Activated CD4-positive, alpha-beta memory T cell treated with anti-CD3 and anti-CD28 coated beads, Interleukin-2, amount 10 ng/mL, durations not matched to agents 7 days and 5 days (primary cell): ENCODE measurements at regions of chr7 and their contacts with region 1.

Region 1: DNA sequence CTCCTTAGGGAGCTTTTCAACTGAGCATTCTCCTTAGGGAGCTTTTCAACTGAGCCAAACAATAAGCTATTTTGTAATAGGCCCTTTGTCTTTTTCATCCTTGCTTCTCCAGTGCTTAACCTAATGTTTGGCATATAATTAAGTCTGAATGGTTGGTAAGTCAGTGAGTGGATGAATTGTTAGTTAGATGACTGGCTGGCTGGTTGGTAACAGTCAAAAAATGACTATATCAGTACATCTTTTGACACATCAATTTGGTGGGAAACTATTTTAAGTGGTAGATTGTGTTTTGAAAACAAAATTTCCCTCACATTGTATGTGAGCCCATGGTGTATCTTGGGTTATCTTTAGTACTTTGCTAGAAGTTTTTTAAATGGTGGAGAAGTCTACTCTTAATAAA is 16.4 kb downstream of the ING3 start:
- DNase-seq: no peak
- H3K4me3 Mint-ChIP-seq: no peak overlapping the region
- H3K27ac Mint-ChIP-seq: no peak overlapping the region
- H3K4me1 Mint-ChIP-seq: peaks cover 3% of the 10 kb centered on the region
- H3K27me3 Mint-ChIP-seq: no peaks in the 10 kb centered on the region

Region 2: DNA sequence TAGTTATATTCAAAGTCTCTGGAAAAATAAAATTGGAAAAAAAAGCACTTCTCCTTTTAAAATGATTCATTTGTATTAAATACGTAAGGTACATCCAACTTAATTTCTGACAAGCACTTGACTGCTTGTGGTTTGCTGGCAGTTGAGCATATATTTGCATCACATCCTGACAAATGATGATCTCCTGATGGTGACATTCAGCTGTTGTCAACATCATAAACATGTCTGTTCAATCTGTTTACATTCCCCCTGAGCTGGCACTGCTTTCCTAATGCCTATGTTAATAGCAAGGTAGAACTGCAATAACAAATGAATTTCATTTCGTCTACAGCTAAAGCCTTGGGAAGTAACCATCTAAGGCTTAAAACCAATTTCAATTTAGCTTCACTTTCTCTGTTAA is 133.4 kb before region 1 on chr7:
- CTCF ChIA-PET with region 1: no interaction called
- POLR2A ChIA-PET with region 1: no interaction called
- DNase-seq: no peak
- H3K4me3 Mint-ChIP-seq: no peak overlapping the region
- H3K27ac Mint-ChIP-seq: no peak overlapping the region
- H3K4me1 Mint-ChIP-seq: no peaks in the 10 kb centered on the region
- H3K27me3 Mint-ChIP-seq: peaks cover 10% of the 10 kb centered on the region

Region 3: DNA sequence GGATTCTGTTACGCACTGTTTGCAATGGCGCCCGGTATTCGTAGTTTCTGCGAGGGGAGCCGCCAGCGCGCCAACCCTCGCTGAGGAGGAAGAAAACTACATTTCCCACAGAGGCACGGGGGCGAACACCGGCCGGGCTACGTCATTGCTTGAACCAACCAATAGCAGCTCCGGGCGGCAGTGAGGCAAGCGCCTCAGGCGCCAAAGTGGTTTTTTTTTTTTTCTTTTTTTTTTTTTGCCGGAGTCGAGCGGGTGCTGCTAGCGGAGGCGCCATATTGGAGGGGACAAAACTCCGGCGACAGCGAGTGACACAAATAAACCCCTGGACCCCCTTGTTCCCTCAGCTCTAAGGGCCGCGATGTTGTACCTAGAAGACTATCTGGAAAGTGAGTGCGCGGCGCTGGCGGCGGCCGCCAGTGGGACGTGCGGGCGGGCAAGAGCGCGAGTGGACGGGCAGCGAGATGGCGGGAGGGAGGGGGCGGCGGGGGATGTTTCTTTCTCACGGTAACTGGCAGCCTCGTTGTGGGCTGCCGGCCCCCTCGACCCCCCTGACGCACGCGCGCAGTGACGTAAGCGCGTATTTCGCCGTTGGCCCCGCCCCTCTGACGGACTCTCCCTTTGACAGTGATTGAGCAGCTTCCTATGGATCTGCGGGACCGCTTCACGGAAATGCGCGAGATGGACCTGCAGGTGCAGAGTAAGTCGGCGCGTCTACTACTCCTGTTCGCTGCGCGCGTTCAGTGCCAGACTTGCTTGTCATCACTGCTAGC is 16.2 kb before region 1 on chr7 and contains the start of gene ING3:
- CTCF ChIA-PET with region 1: interaction called, 3 read pairs
- POLR2A ChIA-PET with region 1: interaction called, 11 read pairs
- DNase-seq: peak; percentile 98
- H3K4me3 Mint-ChIP-seq: peak within 1 kb of the TSS; percentile 97
- H3K27ac Mint-ChIP-seq: peak within 1 kb of the TSS; percentile 96
- H3K4me1 Mint-ChIP-seq: peaks cover 34% of the 10 kb centered on the region
- H3K27me3 Mint-ChIP-seq: peaks cover 5% of the 10 kb centered on the region
- total RNA-seq, gene ING3: 22.2 to 26.5 TPM

Region 4: GRCh38 chr7:121329191-121330052 is 362.5 kb after region 1 on chr7:
- CTCF ChIA-PET with region 1: no interaction called
- POLR2A ChIA-PET with region 1: no interaction called
- DNase-seq: peak; percentile 37
- H3K4me3 Mint-ChIP-seq: peak overlapping the region; percentile 43
- H3K27ac Mint-ChIP-seq: no peak overlapping the region
- H3K4me1 Mint-ChIP-seq: peaks cover 20% of the 10 kb centered on the region
- H3K27me3 Mint-ChIP-seq: peaks cover 57% of the 10 kb centered on the region